K562 (cell line): ENCODE measurements at regions of chr11 and their contacts with region 1.

Region 1: DNA sequence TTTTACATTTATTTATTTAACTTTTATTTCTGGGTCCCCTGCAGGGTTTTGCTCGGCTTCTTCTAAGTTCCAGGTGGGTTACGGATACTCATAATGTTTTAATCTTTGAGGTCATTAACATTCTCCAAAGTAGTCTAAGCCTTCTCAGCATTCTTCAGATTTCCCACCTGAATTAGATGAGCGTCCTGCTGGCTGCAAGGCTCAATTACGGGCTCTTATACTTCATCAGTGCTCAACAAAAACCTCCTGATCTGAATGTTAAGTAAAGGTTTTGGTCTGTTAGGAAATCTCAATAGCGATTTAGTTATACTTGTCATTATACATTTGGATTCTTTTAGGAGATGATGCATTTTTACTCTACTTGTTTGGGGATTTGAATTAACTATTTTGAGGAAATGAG is 27.3 kb upstream of the NFRKB start:
- DNase-seq: no peak
- ATAC-seq: peak; percentile 44; the same call in 2 of the 3 replicates
- H3K4me3 ChIP-seq: no peak overlapping the region
- H3K27ac ChIP-seq: no peak overlapping the region
- H3K4me1 ChIP-seq: no peaks in the 10 kb centered on the region
- H3K27me3 ChIP-seq: no peaks in the 10 kb centered on the region
- CTCF ChIP-seq: no peak
- EP300 ChIP-seq: no peak
- POLR2A ChIP-seq: no peak
- RAD21 ChIP-seq: no peak

Region 2: GRCh38 chr11:130198639-130199363 is 276.1 kb after region 1 on chr11:
- CTCF ChIA-PET with region 1: no interaction called
- POLR2A ChIA-PET with region 1: no interaction called
- in situ Hi-C with region 1: no loop called
- intact Hi-C with region 1: loop called (anchors 5 kb)
- DNase-seq: peak in 2 of 4 experiments; percentile 48 to 50
- ATAC-seq: peak; percentile 66
- H3K4me3 ChIP-seq: no peak overlapping the region
- H3K27ac ChIP-seq: no peak overlapping the region
- H3K4me1 ChIP-seq: peaks cover 0 to 15% of the 10 kb centered on the region in 2 experiments; a peak in 2 of 5 replicates
- H3K27me3 ChIP-seq: peaks cover 55 to 89% of the 10 kb centered on the region in 2 experiments
- CTCF ChIP-seq: peak in 1 of 3 experiments; percentile 36; a peak in 2 of 6 replicates
- EP300 ChIP-seq: no peak
- POLR2A ChIP-seq: no peak
- RAD21 ChIP-seq: 0 out of 4 replicates have a peak, but pooled peaks of 1 of the 2 experiments have one; percentile 11